ENCODE measurements at regions of chr9 and their contacts with region 1.

Region 1: GRCh38 chr9:82191082-82191770 is 202.7 kb downstream of the SPATA31D1 start:
- DNase-seq: no peak
- H3K4me3 Mint-ChIP-seq: no peak overlapping the region
- H3K27ac Mint-ChIP-seq: no peak overlapping the region
- H3K4me1 Mint-ChIP-seq: no peaks in the 10 kb centered on the region
- H3K27me3 Mint-ChIP-seq: no peaks in the 10 kb centered on the region

Region 2: GRCh38 chr9:81894891-81895290 is 296.3 kb before region 1 on chr9:
- intact Hi-C with region 1: loop called (anchors 5 kb)
- DNase-seq: no peak
- H3K4me3 Mint-ChIP-seq: no peak overlapping the region
- H3K27ac Mint-ChIP-seq: no peak overlapping the region
- H3K4me1 Mint-ChIP-seq: no peaks in the 10 kb centered on the region
- H3K27me3 Mint-ChIP-seq: no peaks in the 10 kb centered on the region

Measured in activated T-helper 1 cell treated with anti-CD3 and anti-CD28 coated beads, Interleukin-12 subunit alpha, Interleukin-12 subunit beta, Interleukin-2, Interleukin-4 antibody, amounts not matched to agents 30 ng/mL and 10 ng/mL and 1 ng/mL, durations not matched to agents 14 hours and 24 hours and 36 hours (primary cell).